ENCODE measurements at regions of chr9 and their contacts with region 1.

Region 1: GRCh38 chr9:6008169-6008979 is 7.0 kb downstream of the RANBP6 start:
- DNase-seq: peak; percentile 96
- ATAC-seq: peak; percentile 94

Region 2: DNA sequence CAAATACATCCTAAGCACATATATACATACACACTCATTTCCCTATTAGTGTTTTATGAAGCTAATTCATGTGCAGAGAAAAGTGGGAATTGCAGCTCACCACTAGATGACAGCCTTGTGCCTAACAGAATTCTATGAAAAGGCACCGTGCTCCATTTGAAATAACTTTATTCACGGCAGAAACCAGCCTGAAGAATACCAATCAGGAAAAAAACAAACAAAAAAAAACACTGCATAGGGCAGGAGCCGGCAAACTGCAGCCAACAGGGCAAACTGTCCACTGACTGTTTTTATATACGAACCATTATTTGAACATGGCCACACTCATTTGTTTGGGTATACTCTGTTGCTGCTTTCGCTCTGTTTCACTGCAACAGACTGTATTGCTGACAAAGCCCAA is 209.1 kb before region 1 on chr9:
- intact Hi-C with region 1: no loop called
- DNase-seq: no peak
- ATAC-seq: no peak

Region 3: GRCh38 chr9:5939530-5939929 is 68.8 kb before region 1 on chr9:
- intact Hi-C with region 1: loop called (anchors 5 kb)
- DNase-seq: no peak
- ATAC-seq: no peak

Measured in Right ventricle myocardium inferior (tissue), 1 donor.